Astrocyte of the cerebellum (primary cell): ENCODE measurements at regions of chr16 and their contacts with region 1.

Region 1: DNA sequence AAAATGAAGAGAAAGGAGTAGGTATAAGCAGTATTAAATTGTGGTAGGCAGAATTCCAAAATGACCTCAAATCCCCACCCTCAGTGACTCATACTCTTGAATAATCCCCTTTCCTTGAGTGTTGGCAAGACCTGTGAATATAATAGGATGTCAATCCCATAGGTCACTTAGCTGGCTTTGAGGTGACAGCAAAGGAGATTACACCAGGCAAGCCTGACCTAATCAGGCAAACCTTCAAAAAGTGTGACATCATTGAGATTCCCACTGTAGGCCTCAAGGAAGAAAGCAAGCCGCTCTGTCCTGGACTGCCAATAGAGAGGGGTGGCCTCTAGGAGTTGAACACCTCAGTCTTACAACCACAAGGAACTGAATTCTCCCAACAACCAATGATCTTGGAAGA is 535.2 kb downstream of the RBFOX1 start:
- DNase-seq: no peak
- H3K4me3 ChIP-seq: no peak overlapping the region
- CTCF ChIP-seq: no peak

Region 2: DNA sequence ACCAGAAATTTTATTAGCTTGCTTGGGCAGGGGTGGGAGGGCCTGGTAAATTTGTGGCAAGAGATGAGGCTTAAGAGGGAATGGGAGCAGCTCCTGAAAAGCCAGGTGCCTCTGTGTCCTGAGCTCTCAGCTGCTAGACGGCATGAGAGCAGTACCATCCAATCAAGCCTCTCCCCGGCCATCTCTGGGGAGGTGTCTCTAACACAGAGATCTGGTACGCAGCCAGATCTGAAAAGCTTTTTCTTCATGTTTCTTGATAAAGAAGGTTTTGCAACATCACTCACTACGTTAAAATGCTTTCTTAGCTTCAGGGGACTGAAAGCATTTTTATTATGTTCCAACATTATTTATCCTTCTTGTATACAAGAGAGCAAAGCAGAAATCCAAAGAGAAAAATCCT is 47.0 kb before region 1 on chr16:
- in situ Hi-C with region 1: loop called (anchors 5 kb)
- DNase-seq: no peak
- H3K4me3 ChIP-seq: no peak overlapping the region
- CTCF ChIP-seq: no peak